ENCODE measurements at regions of chr5 and their contacts with region 1.

Region 1: DNA sequence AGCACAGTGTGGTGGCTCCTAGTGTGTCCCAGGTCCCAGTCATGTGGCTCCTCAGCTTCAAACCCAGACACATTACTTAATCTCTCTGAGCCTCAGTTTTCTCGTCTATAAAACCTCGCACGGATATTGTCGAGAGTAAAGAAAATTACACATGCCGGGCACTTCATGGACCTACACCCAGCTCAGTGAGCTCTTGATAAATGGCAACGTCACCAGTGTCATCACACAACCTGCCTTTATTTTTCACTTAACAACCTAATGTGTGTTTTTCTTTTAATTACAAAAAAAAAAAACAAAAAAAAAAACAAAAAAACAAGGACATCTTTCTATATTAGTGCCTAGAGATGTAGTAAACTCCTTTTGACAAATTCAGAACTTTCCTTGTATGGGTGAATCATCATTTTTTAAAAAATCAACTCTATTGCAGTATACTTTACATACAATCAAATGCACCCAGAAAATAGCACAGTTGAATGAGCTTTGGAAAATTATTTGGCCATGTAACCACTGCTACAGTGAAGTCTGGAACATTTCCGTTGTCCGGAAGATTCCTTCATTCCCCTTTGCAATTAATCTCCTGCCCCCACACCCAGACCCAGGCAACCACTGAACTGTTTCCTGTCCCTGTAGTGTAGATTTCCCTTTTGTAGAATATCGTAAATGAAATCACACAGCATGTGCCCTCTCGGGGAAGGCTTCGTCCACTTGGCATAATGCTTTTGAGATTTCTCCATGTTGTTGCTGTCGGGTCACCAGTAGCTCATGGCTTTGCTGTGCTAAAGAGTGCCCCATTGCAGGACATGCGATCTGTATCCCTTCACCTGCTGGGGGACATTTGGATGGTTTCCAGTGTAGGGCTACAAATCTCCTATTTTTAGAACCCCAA is 100.4 kb upstream of the LARP1 start:
- H3K4me3 Mint-ChIP-seq: peak overlapping the region; percentile 2
- H3K27ac Mint-ChIP-seq: peak overlapping the region; percentile 63
- H3K4me1 Mint-ChIP-seq: peaks cover 16% of the 10 kb centered on the region
- H3K27me3 Mint-ChIP-seq: no peaks in the 10 kb centered on the region

Region 2: DNA sequence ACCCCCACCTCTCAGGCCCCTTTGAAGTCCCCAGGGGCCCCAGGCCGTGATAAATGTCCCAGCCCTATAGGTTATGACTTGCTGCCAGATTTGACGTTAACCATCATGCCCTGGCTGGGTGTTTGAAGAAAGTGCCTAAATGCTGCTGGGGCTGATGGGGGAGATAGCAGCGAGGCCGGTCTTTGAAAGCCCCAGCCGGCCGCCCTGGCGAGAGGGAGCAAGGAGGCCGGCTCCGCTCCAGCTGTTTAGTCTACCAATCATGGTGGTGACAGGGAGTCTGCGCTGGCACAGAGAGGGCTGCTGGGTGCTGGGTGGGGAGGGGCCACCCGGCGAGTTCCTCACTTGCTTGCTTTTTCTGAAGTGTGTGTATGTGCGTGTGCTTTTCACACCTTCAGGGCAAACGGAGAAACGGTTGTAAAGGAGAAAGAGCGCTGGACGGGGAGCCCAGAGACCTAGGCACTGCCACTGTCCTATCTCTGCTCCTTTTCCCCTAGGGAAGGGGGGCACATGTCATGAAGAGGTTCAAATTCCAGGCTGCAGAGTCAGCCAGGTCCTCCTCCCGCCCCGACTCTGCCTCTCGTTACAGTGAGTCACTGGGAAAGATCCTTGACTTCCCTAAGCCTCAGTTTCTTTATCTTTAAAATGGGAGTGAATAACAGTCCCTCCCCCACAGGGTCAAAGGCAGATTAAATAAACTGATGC is 50.6 kb before region 1 on chr5:
- intact Hi-C with region 1: no loop called
- H3K4me3 Mint-ChIP-seq: no peak overlapping the region
- H3K27ac Mint-ChIP-seq: no peak overlapping the region
- H3K4me1 Mint-ChIP-seq: peaks cover 8% of the 10 kb centered on the region
- H3K27me3 Mint-ChIP-seq: peaks cover 51% of the 10 kb centered on the region

Region 3: DNA sequence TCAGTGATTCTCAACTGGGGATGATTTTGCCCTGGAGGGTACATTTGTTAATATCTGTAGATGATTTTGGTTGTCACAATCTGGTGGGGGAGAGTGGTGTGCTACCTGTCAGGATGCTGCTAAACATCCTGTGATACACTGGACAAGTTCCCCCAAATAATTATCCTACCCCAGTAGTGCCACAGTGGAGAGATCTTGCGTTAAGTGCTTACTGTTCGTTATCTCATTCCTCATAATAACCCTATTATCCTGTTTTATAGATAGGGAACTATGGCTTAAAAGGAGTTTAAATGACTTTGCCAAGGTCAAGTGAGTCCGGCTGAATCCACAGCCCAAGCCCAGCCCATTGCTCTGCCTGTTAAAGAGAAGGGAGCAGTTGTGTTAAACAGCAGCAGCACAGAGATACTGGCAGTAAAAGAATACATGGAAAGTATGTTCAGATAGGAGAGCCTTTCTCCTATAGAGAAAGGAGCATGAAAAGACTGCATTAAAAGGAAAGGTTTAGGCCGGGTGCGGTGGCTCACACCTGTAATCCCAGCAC is 219.1 kb after region 1 on chr5:
- intact Hi-C with region 1: loop called (anchors 5 kb)
- H3K4me3 Mint-ChIP-seq: no peak overlapping the region
- H3K27ac Mint-ChIP-seq: no peak overlapping the region
- H3K4me1 Mint-ChIP-seq: no peaks in the 10 kb centered on the region
- H3K27me3 Mint-ChIP-seq: no peaks in the 10 kb centered on the region

Measured in dendritic cell treated with granulocyte-macrophage colony-stimulating factor and Interleukin-4, amounts not matched to agents 40 ng/mL and 50 ng/mL, for 4 days (primary cell).